Ascending aorta (tissue), 2 donors: ENCODE measurements at regions of chr1 and their contacts with region 1.

Region 1: GRCh38 chr1:90133133-90133532 is 138.2 kb downstream of the ZNF326 start:
- DNase-seq: peak in 1 of 2 donors; percentile 70
- H3K4me3 ChIP-seq: no peak overlapping the region
- H3K27ac ChIP-seq: no peak overlapping the region
- H3K4me1 ChIP-seq: peaks cover 0 to 3% of the 10 kb centered on the region in 2 donors
- H3K27me3 ChIP-seq: no peaks in the 10 kb centered on the region
- CTCF ChIP-seq: peak; percentile 22 to 65 (median 38)

Region 2: DNA sequence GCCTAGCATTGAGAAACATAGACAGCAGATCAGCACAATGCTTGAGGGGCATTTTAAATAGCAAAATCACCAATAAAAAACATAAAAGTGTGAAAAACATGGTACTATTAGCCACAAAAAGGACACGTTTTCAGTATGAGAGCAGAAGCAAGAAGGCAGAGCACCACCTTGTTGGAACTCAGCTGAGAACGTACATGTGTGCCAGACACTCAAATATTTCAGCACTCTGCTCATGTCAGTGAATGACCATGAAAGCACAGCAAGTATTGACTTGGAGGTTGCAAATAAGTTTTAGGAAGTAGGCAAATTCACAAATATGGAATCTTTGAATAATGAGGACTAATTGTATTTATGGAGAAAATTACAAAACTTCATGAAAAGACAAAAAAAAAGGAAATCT is 1642.5 kb before region 1 on chr1:
- intact Hi-C with region 1: no loop called
- DNase-seq: no peak
- H3K4me3 ChIP-seq: no peak overlapping the region
- H3K27ac ChIP-seq: no peak overlapping the region
- H3K4me1 ChIP-seq: no peaks in the 10 kb centered on the region
- H3K27me3 ChIP-seq: no peaks in the 10 kb centered on the region
- CTCF ChIP-seq: no peak

Region 3: GRCh38 chr1:90122654-90123340 is 10.3 kb before region 1 on chr1:
- intact Hi-C with region 1: no loop called
- DNase-seq: no peak
- H3K4me3 ChIP-seq: no peak overlapping the region
- H3K27ac ChIP-seq: no peak overlapping the region
- H3K4me1 ChIP-seq: no peaks in the 10 kb centered on the region
- H3K27me3 ChIP-seq: no peaks in the 10 kb centered on the region
- CTCF ChIP-seq: no peak

Region 4: GRCh38 chr1:90291431-90292216 is 158.5 kb after region 1 on chr1:
- intact Hi-C with region 1: loop called (anchors 10 kb)
- DNase-seq: no peak
- H3K4me3 ChIP-seq: no peak overlapping the region
- H3K27ac ChIP-seq: no peak overlapping the region
- H3K4me1 ChIP-seq: no peaks in the 10 kb centered on the region
- H3K27me3 ChIP-seq: no peaks in the 10 kb centered on the region
- CTCF ChIP-seq: no peak

Region 5: GRCh38 chr1:90964444-90965035 is 831.4 kb after region 1 on chr1:
- intact Hi-C with region 1: loop called (anchors 10 kb)
- DNase-seq: no peak
- H3K4me3 ChIP-seq: no peak overlapping the region
- H3K27ac ChIP-seq: no peak overlapping the region
- H3K4me1 ChIP-seq: peaks cover 0 to 2% of the 10 kb centered on the region in 2 donors
- H3K27me3 ChIP-seq: no peaks in the 10 kb centered on the region
- CTCF ChIP-seq: peak in 2 of 3 experiments; percentile 8 to 35

Region 6: GRCh38 chr1:91165033-91165654 is 1032.0 kb after region 1 on chr1:
- intact Hi-C with region 1: loop called (anchors 2 kb)
- DNase-seq: peak in 1 of 2 donors; percentile 75
- H3K4me3 ChIP-seq: no peak overlapping the region
- H3K27ac ChIP-seq: no peak overlapping the region
- H3K4me1 ChIP-seq: no peaks in the 10 kb centered on the region
- H3K27me3 ChIP-seq: no peaks in the 10 kb centered on the region
- CTCF ChIP-seq: peak; percentile 70 to 86 (median 79)